ENCODE measurements at regions of chr1 and their contacts with region 1.

Region 1: GRCh38 chr1:205255941-205256780 is 28.4 kb downstream of the TMCC2 start:
- DNase-seq: peak; percentile 95
- H3K4me3 Mint-ChIP-seq: no peak overlapping the region
- H3K27ac Mint-ChIP-seq: no peak overlapping the region
- H3K4me1 Mint-ChIP-seq: peaks cover 31% of the 10 kb centered on the region
- H3K27me3 Mint-ChIP-seq: no peaks in the 10 kb centered on the region
- CTCF ChIP-seq: peak; percentile 100

Region 2: DNA sequence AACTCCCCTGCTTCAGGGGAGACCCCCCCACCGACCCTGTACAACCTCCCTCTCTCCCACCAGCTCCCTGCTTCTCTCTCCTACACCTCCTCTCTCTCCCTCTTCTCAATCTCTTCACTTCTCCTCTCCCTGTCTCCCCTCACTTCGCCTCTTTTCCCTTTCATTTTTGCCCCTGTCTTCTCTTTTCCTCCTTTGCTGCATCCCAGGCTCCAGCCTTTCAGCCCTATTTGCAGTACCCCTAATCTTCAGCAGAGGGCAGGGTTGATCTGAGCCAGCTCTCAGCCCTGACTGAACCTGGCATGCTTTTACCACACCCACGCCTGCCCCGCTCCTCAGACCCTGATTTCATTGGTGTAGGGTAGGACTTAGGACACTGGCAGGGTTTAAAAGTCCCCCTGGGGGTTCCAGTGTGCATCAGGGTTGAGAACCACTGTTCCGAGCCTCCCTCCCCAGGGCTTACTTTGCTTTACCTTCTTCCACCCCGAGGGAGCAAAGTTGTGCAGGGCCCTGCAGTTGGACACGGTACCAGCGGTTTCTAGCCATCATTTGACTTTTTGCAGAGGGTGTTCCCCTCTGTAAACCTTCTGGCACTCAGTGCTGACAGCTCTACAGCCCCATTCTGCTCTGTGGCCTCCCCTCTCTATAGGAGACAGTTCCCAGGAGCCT is 280.5 kb before region 1 on chr1:
- CTCF ChIA-PET with region 1: interaction called, 207 read pairs
- POLR2A ChIA-PET with region 1: interaction called, 3 read pairs
- intact Hi-C with region 1: loop called (anchors 1 kb)
- DNase-seq: peak; percentile 78
- H3K4me3 Mint-ChIP-seq: no peak overlapping the region
- H3K27ac Mint-ChIP-seq: no peak overlapping the region
- H3K4me1 Mint-ChIP-seq: peaks cover 8% of the 10 kb centered on the region
- H3K27me3 Mint-ChIP-seq: peaks cover 58% of the 10 kb centered on the region
- CTCF ChIP-seq: peak; percentile 99

Region 3: DNA sequence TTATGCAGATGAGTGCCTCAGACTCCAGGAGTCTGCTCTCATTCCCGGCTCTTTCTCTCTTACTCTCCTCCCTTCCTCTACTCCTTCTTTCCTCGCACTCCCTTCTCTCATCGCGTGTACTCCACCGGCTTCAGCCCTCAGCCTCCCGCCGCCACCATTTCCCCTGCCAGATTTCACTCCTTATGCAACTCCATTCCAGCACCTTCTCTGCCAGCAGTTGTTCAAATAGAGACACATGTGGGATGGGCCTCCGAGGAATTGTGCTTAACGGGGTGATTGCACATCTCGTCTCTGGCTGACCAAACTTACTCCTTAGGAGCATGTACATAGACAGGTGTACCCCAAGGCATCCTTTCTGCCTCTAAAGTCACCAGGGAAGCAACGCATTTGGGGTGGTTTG is 211.0 kb before region 1 on chr1:
- CTCF ChIA-PET with region 1: no interaction called
- POLR2A ChIA-PET with region 1: no interaction called
- intact Hi-C with region 1: no loop called
- DNase-seq: no peak
- H3K4me3 Mint-ChIP-seq: no peak overlapping the region
- H3K27ac Mint-ChIP-seq: no peak overlapping the region
- H3K4me1 Mint-ChIP-seq: no peaks in the 10 kb centered on the region
- H3K27me3 Mint-ChIP-seq: peaks cover 100% of the 10 kb centered on the region
- CTCF ChIP-seq: no peak

Region 4: GRCh38 chr1:205111354-205111753 is 144.8 kb before region 1 on chr1:
- CTCF ChIA-PET with region 1: interaction called, 10 read pairs
- POLR2A ChIA-PET with region 1: no interaction called
- intact Hi-C with region 1: no loop called
- DNase-seq: no peak
- H3K4me3 Mint-ChIP-seq: no peak overlapping the region
- H3K27ac Mint-ChIP-seq: no peak overlapping the region
- H3K4me1 Mint-ChIP-seq: no peaks in the 10 kb centered on the region
- H3K27me3 Mint-ChIP-seq: no peaks in the 10 kb centered on the region
- CTCF ChIP-seq: no peak

Region 5: GRCh38 chr1:205199090-205199930 is 56.9 kb before region 1 on chr1:
- CTCF ChIA-PET with region 1: interaction called, 17 read pairs
- POLR2A ChIA-PET with region 1: no interaction called
- intact Hi-C with region 1: no loop called
- DNase-seq: no peak
- H3K4me3 Mint-ChIP-seq: no peak overlapping the region
- H3K27ac Mint-ChIP-seq: no peak overlapping the region
- H3K4me1 Mint-ChIP-seq: peaks cover 17% of the 10 kb centered on the region
- H3K27me3 Mint-ChIP-seq: no peaks in the 10 kb centered on the region
- CTCF ChIP-seq: no peak

Region 6: DNA sequence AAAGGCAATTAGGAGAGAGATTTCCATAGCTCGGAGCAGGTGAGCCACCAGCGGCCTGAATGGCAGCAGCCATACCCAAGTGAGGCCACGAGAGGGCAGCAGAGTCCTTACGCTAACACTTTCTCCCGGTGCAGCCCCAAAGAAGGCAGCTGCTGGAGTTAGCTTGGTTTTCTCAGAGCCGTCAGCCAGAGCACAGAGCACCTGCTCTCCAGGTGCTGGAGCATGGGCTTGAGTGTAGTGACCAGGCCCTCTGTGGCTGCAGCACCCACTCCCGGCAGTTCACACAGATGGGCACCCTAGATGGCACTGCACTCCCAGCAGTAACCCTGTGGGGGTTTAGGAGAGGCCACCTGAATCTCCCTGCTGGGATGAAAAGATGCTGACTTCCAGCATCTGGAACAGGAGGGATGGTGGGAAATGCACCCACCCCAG is 17.4 kb after region 1 on chr1:
- CTCF ChIA-PET with region 1: interaction called, 192 read pairs
- POLR2A ChIA-PET with region 1: interaction called, 15 read pairs
- intact Hi-C with region 1: no loop called
- DNase-seq: peak; percentile 93
- H3K4me3 Mint-ChIP-seq: no peak overlapping the region
- H3K27ac Mint-ChIP-seq: no peak overlapping the region
- H3K4me1 Mint-ChIP-seq: peaks cover 27% of the 10 kb centered on the region
- H3K27me3 Mint-ChIP-seq: peaks cover 9% of the 10 kb centered on the region
- CTCF ChIP-seq: peak; percentile 100